ENCODE measurements at regions of chr17 and their contacts with region 1.

Region 1: DNA sequence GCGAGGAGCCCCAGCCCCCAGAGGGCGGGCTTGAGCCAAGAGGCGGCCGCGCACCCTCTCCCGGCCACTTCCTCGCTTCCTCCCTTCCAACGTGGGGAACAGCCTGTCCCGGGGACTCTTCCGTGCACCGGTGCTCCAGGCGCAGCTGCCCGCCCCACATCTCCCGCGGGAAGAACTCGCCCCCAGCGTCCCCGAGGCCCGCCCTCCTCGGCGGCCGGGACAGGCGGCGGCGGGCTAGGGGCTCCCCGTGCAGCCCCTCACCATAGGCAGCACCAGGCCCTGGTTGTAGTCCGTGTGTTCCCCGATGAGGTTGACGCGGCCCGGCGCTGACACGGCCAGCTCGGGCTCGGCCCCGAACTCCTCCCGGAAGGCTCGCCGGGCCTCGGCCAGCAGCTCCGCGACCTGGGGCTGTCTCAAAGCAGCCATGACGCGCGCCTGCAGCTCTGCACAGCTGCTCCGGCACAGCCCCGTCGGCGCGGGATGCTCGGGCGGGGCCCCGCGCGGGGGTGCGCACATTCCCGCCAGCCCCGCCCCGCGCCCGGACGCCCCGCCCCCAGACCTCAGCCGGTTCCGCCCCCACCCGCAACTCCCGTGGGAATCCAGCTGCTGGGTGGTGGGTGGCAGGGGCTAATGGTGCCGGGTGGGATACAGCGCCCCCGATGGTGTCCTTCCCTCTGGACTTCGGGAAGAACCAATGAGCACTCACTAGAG is at the start of gene GALK1:
- DNase-seq: peak; percentile 80
- ATAC-seq: peak; percentile 94
- H3K4me3 Mint-ChIP-seq: peak within 1 kb of the TSS; percentile 79
- H3K27ac Mint-ChIP-seq: peak within 1 kb of the TSS; percentile 63
- H3K4me1 Mint-ChIP-seq: peaks cover 15% of the 10 kb centered on the region
- H3K27me3 Mint-ChIP-seq: peaks cover 6% of the 10 kb centered on the region
- total RNA-seq, gene GALK1: 52.2 to 56.9 TPM

Region 2: DNA sequence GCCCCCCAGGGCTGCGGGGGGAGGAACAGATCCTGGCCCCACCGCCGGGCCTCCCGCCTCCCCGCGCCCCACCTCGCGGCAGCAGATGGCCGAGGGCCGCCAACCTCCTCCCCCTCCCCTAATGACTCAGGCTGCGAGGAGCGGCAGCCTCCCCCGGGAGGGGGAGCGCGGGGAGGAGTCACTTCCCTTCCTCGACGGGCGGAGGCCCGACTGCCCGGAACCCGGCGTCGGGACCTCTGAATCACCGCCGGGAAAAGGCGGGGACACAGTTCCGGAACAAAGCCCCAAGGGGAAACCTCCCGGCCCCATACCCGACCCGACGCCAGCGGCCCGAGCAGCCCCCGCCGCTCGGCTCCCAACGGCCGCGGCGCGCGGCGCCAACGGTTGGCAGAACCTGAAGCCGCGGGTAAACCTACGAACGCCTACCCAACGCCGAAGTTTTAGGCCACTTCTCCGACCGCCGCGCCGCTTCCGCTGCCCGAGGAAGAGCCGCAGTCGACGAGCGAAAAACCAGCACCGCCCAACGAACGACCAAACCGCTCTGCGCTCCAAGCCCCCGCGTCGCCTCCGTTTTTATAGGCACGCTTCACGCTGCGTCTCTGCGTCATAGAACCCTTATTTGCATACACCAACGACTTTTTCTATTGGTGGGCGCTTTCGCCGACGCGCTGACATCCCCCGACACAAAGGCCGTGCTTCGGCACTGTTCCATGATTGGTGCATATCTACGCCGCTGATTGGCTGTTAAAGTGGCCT is 14.5 kb after region 1 on chr17:
- CTCF ChIA-PET with region 1: interaction called, 35 read pairs
- POLR2A ChIA-PET with region 1: interaction called, 188 read pairs
- DNase-seq: peak; percentile 97
- ATAC-seq: peak; percentile 70
- H3K4me3 Mint-ChIP-seq: peak overlapping the region; percentile 86
- H3K27ac Mint-ChIP-seq: peak overlapping the region; percentile 97
- H3K4me1 Mint-ChIP-seq: peaks cover 51% of the 10 kb centered on the region
- H3K27me3 Mint-ChIP-seq: peaks cover 3% of the 10 kb centered on the region

Region 3: GRCh38 chr17:75784473-75785015 is 19.7 kb after region 1 on chr17 and contains the start of gene UNK:
- CTCF ChIA-PET with region 1: interaction called, 10 read pairs
- POLR2A ChIA-PET with region 1: interaction called, 188 read pairs
- DNase-seq: peak; percentile 98
- ATAC-seq: peak; percentile 72
- H3K4me3 Mint-ChIP-seq: peak within 1 kb of the TSS; percentile 91
- H3K27ac Mint-ChIP-seq: peak within 1 kb of the TSS; percentile 100
- H3K4me1 Mint-ChIP-seq: peaks cover 50% of the 10 kb centered on the region
- H3K27me3 Mint-ChIP-seq: peaks cover 3% of the 10 kb centered on the region
- total RNA-seq, gene UNK: 30.2 to 31.0 TPM

Region 4: DNA sequence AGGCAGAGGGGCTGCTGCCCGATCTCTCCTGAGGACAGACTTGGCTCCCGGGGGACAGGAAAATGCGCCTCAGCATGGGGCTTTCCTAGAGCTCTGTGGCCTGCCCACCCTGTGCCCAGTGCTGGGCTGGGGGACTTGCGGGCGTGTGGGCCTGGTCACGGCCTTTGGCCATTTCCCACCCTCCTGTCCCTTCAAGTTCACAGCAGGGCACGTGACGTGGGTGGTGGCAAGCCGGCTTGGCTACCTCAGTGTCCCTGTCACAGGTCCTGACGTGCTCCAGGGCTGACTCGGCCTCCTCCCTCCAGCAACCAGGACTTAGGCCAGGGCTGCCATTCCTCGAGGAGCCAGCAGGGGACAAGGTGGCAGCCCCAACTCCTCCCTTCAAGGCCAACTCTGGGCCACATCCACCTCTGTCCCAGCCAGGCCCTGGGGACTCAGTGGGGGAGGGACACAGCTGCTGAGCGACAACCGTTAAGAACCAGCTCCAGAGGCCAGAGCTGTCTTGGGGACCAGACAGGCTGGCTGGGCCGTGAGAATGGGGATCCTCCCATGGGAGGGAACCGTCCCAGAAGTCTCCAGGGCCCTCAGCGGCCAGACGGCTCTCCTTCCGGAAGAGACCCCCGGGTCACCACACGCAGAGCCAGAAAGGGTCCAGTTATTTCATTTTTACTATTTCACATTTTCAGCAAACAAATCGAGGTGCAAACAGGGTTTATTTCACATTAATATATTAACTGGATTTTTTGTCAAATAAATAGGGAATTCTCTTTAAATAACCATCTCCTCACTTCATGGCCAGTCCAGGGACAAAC is 80.4 kb after region 1 on chr17:
- CTCF ChIA-PET with region 1: interaction called, 20 read pairs
- POLR2A ChIA-PET with region 1: no interaction called
- DNase-seq: peak; percentile 74
- ATAC-seq: peak; percentile 49
- H3K4me3 Mint-ChIP-seq: peak overlapping the region; percentile 57
- H3K27ac Mint-ChIP-seq: peak overlapping the region; percentile 77
- H3K4me1 Mint-ChIP-seq: peaks cover 36% of the 10 kb centered on the region
- H3K27me3 Mint-ChIP-seq: no peaks in the 10 kb centered on the region

Region 5: GRCh38 chr17:75864448-75864871 is 99.6 kb after region 1 on chr17:
- CTCF ChIA-PET with region 1: interaction called, 17 read pairs
- POLR2A ChIA-PET with region 1: no interaction called
- DNase-seq: peak; percentile 74
- ATAC-seq: peak; percentile 88
- H3K4me3 Mint-ChIP-seq: peak overlapping the region; percentile 39
- H3K27ac Mint-ChIP-seq: peak overlapping the region; percentile 83
- H3K4me1 Mint-ChIP-seq: peaks cover 29% of the 10 kb centered on the region
- H3K27me3 Mint-ChIP-seq: no peaks in the 10 kb centered on the region

Region 6: GRCh38 chr17:75877752-75878173 is 112.9 kb after region 1 on chr17:
- CTCF ChIA-PET with region 1: interaction called, 11 read pairs
- POLR2A ChIA-PET with region 1: interaction called, 3 read pairs
- DNase-seq: peak; percentile 82
- ATAC-seq: peak; percentile 77
- H3K4me3 Mint-ChIP-seq: peak overlapping the region; percentile 91
- H3K27ac Mint-ChIP-seq: peak overlapping the region; percentile 92
- H3K4me1 Mint-ChIP-seq: peaks cover 54% of the 10 kb centered on the region
- H3K27me3 Mint-ChIP-seq: peaks cover 8% of the 10 kb centered on the region

Region 7: DNA sequence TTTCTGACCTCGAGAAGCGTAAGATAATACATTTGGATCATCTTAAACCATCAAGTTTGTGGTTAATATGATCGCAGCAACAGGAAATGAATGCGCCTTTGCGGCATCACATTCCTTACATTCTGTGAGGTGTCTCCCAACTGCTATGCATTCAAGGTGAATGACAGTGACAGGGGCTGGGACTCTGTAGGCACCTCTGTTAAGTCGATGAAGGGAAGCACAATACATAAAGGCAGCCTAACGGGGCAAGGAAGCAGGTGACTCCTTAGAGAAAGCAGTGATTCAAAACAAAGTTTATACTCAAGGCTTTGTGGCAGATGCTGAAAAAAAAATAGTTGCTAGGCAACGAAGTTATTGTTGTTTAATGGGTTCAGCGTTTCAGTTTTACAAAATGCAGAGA is 283.8 kb after region 1 on chr17:
- CTCF ChIA-PET with region 1: no interaction called
- POLR2A ChIA-PET with region 1: no interaction called
- DNase-seq: no peak
- ATAC-seq: peak; percentile 23
- H3K4me3 Mint-ChIP-seq: no peak overlapping the region
- H3K27ac Mint-ChIP-seq: no peak overlapping the region
- H3K4me1 Mint-ChIP-seq: peaks cover 4% of the 10 kb centered on the region
- H3K27me3 Mint-ChIP-seq: no peaks in the 10 kb centered on the region

Measured in activated CD8-positive, alpha-beta T cell treated with anti-CD3 and anti-CD28 coated beads, Interleukin-2, amount 10 ng/mL, durations not matched to agents 7 days and 5 days (primary cell).